ENCODE measurements at regions of chrX and their contacts with region 1.

Region 1: GRCh38 chrX:136028251-136028984 is 43.2 kb downstream of the SLC9A6 start:
- DNase-seq: peak; percentile 49 to 82 (median 78)
- H3K4me3 ChIP-seq: no peak overlapping the region
- H3K27ac ChIP-seq: no peak overlapping the region
- H3K4me1 ChIP-seq: no peaks in the 10 kb centered on the region
- H3K27me3 ChIP-seq: no peaks in the 10 kb centered on the region

Region 2: DNA sequence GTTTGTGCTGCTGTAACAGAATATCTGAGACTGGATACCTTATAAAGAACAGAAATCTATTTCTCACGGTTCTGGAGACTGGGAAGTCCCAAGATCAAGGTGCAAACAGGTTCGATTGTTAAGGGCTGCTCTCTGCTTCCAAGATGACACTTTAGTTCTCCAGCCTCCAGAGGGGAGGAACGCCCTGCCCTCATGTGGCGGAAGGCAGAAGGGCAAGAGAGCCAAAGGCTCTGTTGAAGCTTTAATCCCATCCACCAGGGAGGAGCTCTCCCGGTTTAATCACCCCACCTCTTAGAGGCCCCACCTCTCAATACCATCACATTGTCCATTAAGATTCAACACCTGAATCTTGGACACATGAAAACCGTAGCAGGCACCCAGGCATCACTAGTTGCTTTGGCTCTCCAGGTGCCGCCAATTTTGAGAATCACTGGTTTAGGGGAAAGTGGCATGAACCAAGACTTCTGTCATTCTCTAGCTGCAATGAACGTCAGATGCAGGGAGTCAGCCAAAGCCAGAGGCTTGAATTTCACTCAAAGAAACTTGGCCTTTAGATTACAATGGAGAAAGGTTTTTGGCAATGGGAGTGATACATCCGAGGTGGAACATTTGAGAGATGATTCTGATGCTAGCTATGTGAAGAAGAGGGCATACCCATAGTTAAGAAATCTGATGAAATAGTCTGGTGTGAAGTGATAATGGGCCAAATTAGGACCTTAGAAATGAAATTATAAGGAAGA is 134.6 kb after region 1 on chrX:
- CTCF ChIA-PET with region 1: interaction called, 59 read pairs
- POLR2A ChIA-PET with region 1: no interaction called
- DNase-seq: peak; percentile 34 to 57 (median 51)
- H3K4me3 ChIP-seq: no peak overlapping the region
- H3K27ac ChIP-seq: no peak overlapping the region
- H3K4me1 ChIP-seq: peaks cover 0 to 18% (median 6%) of the 10 kb centered on the region in 4 experiments
- H3K27me3 ChIP-seq: no peaks in the 10 kb centered on the region

Region 3: DNA sequence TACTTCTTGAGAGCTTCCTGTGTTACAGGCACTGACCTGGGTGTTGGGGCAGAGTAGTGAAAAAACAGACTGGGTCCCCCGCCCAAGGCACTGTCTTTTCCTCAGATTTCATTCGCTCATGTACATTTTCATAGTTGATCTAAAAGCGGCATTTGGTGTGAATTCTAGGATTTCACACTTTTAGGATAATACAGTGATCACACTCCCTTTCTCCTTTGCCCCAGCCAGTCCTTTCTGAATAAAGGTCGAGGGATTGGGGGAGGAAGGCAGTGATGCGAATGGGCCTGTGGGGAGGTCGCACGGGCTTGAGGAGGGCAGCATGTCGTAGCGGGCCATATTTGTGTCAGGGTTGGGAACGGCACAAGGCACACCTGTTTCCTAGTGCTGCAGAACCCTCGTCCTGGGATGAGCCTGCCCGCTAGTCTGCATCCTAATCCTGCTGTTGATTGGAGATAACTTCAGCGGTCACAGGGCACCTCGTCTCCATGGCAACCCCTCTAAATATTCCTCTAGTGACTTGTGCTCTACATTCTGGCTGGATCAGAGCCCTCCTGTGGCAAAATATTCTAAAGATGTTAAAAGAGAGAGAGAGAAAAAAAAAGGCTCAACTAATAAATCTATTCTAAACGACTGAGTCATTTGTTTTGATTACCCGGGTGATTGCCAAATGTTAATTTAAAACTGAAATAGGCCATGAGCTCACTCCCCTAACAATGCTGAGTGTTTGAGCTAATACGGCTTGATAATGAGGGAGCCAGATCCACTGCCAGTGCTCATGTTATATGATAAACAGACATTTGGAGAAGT is 140.7 kb after region 1 on chrX:
- CTCF ChIA-PET with region 1: interaction called, 59 read pairs
- POLR2A ChIA-PET with region 1: no interaction called
- DNase-seq: peak; percentile 90 to 97 (median 96)
- H3K4me3 ChIP-seq: peak overlapping the region in 1 of 7 experiments; percentile 23
- H3K27ac ChIP-seq: peak overlapping the region; percentile 70 to 81
- H3K4me1 ChIP-seq: peaks cover 0 to 25% (median 14%) of the 10 kb centered on the region in 4 experiments
- H3K27me3 ChIP-seq: no peaks in the 10 kb centered on the region

Region 4: GRCh38 chrX:136209016-136209738 is 180.8 kb after region 1 on chrX:
- CTCF ChIA-PET with region 1: interaction called, 29 read pairs
- POLR2A ChIA-PET with region 1: no interaction called
- DNase-seq: peak; percentile 62 to 81 (median 78)
- H3K4me3 ChIP-seq: peak overlapping the region in 2 of 7 experiments; percentile 8 to 10
- H3K27ac ChIP-seq: peak overlapping the region in 1 of 2 experiments; percentile 60
- H3K4me1 ChIP-seq: peaks cover 6 to 74% (median 32%) of the 10 kb centered on the region in 4 experiments
- H3K27me3 ChIP-seq: peaks cover 0 to 7% (median 0%) of the 10 kb centered on the region in 5 experiments